Caco-2 (cell line): ENCODE measurements at regions of chr2 and their contacts with region 1.

Region 1: DNA sequence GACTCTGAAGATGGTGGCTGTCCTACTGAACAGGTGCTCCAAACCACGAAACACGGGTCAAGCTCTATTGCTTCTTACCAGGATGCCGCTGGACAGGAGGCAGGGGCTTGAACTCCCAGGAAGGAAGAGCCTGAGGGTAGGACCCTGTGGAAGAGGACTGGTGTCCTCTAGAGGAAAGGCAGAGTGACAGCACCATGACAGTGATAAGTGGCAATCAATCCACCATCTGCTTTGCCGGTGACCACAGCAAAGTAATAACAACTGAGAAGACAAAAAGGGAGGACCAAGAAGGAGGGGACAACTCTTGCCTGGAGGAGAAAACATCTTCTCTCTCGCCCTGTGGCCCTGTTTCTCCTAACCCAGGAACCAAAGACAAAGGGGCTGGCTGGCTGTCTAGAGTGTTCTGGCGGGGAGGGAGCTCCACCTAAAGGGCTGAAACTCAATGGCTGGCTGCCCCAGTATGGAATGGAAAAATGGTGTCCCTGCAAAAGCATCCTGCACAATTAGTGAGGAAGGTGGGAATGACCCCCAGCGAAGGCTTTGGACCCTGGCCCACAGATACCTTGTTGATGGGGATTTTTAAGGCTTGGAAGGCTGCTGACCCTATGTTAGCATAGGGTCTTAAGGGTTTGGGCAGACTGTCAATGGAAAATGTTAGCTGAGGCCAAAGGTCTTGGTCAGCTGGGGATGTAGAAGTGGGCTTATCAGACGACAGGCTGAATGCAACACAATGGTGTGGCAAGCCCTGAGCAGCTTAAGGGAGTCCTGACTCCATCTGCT is 35.4 kb downstream of the PROC start:
- DNase-seq: peak; percentile 36 to 48
- H3K4me3 ChIP-seq: no peak overlapping the region
- H3K4me3 Mint-ChIP-seq: peak overlapping the region; percentile 6
- H3K27ac Mint-ChIP-seq: peak overlapping the region; percentile 18
- H3K4me1 ChIP-seq: peaks cover 40% of the 10 kb centered on the region
- H3K4me1 Mint-ChIP-seq: peaks cover 36% of the 10 kb centered on the region
- H3K27me3 ChIP-seq: no peaks in the 10 kb centered on the region
- H3K27me3 Mint-ChIP-seq: no peaks in the 10 kb centered on the region
- CTCF ChIP-seq: peak in 1 of 2 experiments; percentile 25

Region 2: DNA sequence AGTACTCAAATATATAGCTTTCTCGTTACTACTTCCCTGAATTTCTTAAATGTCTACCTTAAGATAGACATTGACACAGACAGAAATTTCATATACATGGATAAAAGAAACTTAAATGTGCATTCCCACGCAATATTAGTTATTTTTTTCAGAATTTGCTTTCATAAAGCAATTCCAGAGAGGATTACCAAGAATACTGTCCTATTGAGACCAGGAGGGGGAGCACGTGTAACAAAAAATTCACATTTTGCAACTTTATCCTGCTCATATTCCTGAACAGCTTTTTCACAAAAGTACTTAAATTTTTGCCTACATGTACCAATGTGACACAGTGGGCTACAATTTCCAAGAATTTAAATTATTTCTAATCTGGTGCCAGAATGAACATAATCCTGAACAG is 128.9 kb before region 1 on chr2:
- CTCF ChIA-PET with region 1: interaction called, 3 read pairs
- POLR2A ChIA-PET with region 1: no interaction called
- intact Hi-C with region 1: loop called (anchors 1 kb)
- DNase-seq: peak in 1 of 2 experiments; percentile 48
- H3K4me3 ChIP-seq: no peak overlapping the region
- H3K4me3 Mint-ChIP-seq: no peak overlapping the region
- H3K27ac Mint-ChIP-seq: no peak overlapping the region
- H3K4me1 ChIP-seq: no peaks in the 10 kb centered on the region
- H3K4me1 Mint-ChIP-seq: no peaks in the 10 kb centered on the region
- H3K27me3 ChIP-seq: no peaks in the 10 kb centered on the region
- H3K27me3 Mint-ChIP-seq: no peaks in the 10 kb centered on the region
- CTCF ChIP-seq: peak; percentile 67 to 79

Region 3: DNA sequence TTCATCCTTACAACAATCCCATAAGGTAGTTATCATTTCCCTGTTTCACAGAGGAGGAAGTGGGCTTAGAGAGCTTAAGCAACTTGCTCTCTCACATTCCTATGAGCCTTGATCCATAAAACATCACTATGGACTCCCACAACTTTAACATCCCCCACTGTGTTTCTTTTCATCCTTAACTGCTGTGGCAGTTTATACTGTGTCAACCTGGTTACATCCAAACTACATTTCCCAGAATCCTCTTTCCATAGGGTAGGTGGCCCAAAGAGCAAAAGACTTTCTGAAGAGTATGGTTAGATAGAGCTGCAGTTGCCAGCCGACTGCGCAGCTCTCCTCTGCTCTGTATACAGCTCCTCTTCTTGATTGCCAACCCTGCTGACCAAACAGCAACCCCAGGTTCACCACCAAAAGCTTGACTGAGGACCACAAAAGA is 88.4 kb before region 1 on chr2:
- CTCF ChIA-PET with region 1: no interaction called
- POLR2A ChIA-PET with region 1: no interaction called
- intact Hi-C with region 1: no loop called
- DNase-seq: no peak
- H3K4me3 ChIP-seq: no peak overlapping the region
- H3K4me3 Mint-ChIP-seq: no peak overlapping the region
- H3K27ac Mint-ChIP-seq: no peak overlapping the region
- H3K4me1 ChIP-seq: peaks cover 3% of the 10 kb centered on the region; the same call in 1 of the 2 replicates
- H3K4me1 Mint-ChIP-seq: peaks cover 11% of the 10 kb centered on the region
- H3K27me3 ChIP-seq: no peaks in the 10 kb centered on the region
- H3K27me3 Mint-ChIP-seq: no peaks in the 10 kb centered on the region
- CTCF ChIP-seq: no peak

Region 4: GRCh38 chr2:127408004-127408806 is 45.4 kb before region 1 on chr2:
- CTCF ChIA-PET with region 1: no interaction called
- POLR2A ChIA-PET with region 1: no interaction called
- intact Hi-C with region 1: loop called (anchors 1 kb)
- DNase-seq: peak; percentile 85 to 91
- H3K4me3 ChIP-seq: peak overlapping the region; percentile 75
- H3K4me3 Mint-ChIP-seq: peak overlapping the region; percentile 83
- H3K27ac Mint-ChIP-seq: peak overlapping the region; percentile 57
- H3K4me1 ChIP-seq: peaks cover 30% of the 10 kb centered on the region
- H3K4me1 Mint-ChIP-seq: peaks cover 31% of the 10 kb centered on the region
- H3K27me3 ChIP-seq: no peaks in the 10 kb centered on the region
- H3K27me3 Mint-ChIP-seq: no peaks in the 10 kb centered on the region
- CTCF ChIP-seq: no peak

Region 5: GRCh38 chr2:127422810-127423475 is 30.6 kb before region 1 on chr2:
- CTCF ChIA-PET with region 1: no interaction called
- POLR2A ChIA-PET with region 1: no interaction called
- intact Hi-C with region 1: loop called (anchors 1 kb)
- DNase-seq: peak in 1 of 2 experiments; percentile 34
- H3K4me3 ChIP-seq: peak overlapping the region; percentile 50
- H3K4me3 Mint-ChIP-seq: peak overlapping the region; percentile 71
- H3K27ac Mint-ChIP-seq: no peak overlapping the region
- H3K4me1 ChIP-seq: peaks cover 7% of the 10 kb centered on the region; the same call in 1 of the 2 replicates
- H3K4me1 Mint-ChIP-seq: peaks cover 7% of the 10 kb centered on the region
- H3K27me3 ChIP-seq: no peaks in the 10 kb centered on the region
- H3K27me3 Mint-ChIP-seq: no peaks in the 10 kb centered on the region
- CTCF ChIP-seq: no peak

Region 6: DNA sequence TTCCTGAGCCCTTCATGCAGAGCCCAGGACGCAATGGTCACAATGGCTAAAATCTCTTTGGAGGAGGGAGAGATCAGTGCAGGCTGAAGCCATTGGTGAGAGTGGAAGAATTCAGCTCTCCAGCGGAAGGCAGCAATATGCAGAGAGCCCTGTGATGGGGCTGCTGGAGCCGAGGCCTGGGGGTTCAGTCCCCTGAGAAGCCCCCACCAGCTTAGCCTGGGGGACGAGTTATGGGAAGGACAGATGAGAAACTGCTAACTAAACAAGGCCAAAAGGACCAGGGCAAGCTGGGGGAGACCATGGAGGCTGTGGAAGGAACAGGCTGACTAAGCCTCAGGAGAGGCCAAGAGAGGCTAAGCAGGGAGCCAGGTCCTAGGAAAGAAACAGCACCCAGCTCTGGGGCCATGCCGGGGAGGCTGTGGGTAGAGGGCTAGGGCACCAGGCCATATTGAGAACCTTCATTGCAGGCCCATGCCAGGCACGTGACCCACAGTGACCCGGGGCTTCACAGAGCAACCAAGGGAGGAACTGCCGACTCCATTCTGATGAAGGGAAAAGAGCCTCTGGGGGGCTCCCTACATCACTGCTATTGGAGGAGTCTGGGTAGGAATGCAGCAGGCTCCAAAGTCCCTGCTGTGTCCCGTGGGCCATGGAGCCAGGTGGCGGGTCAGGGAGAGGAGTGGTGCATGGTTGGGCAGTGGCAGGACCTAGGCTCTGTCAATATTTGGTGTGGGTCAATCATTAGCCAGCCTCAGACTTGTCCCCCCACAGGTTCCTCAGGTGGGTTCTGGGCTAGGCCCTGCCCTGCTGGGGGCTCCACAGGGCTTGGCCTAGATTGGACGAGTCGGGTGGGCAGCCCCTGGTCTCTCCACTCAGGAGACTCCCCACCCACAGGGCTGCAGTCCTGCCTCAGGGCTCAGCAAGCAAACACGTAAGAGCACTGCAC is 15.5 kb before region 1 on chr2:
- CTCF ChIA-PET with region 1: interaction called, 3 read pairs
- POLR2A ChIA-PET with region 1: no interaction called
- intact Hi-C with region 1: loop called (anchors 1 kb)
- DNase-seq: peak; percentile 83 to 93
- H3K4me3 ChIP-seq: no peak overlapping the region
- H3K4me3 Mint-ChIP-seq: peak overlapping the region; percentile 34
- H3K27ac Mint-ChIP-seq: peak overlapping the region; percentile 84
- H3K4me1 ChIP-seq: peaks cover 19% of the 10 kb centered on the region
- H3K4me1 Mint-ChIP-seq: peaks cover 6% of the 10 kb centered on the region
- H3K27me3 ChIP-seq: no peaks in the 10 kb centered on the region
- H3K27me3 Mint-ChIP-seq: no peaks in the 10 kb centered on the region
- CTCF ChIP-seq: peak in 1 of 2 experiments; percentile 21